T-cell (primary cell): ENCODE measurements at regions of chr7 and their contacts with region 1.

Region 1: GRCh38 chr7:23712368-23713284 is 2.6 kb downstream of the STK31 start:
- DNase-seq: peak in 1 of 35 experiments; percentile 71
- ATAC-seq: peak in 1 of 4 experiments; percentile 33
- H3K4me3 ChIP-seq: no peak overlapping the region
- H3K4me3 Mint-ChIP-seq: no peak overlapping the region
- H3K27ac ChIP-seq: no peak overlapping the region
- H3K27ac Mint-ChIP-seq: no peak overlapping the region
- H3K4me1 ChIP-seq: no peaks in the 10 kb centered on the region
- H3K4me1 Mint-ChIP-seq: no peaks in the 10 kb centered on the region
- H3K27me3 ChIP-seq: no peaks in the 10 kb centered on the region
- H3K27me3 Mint-ChIP-seq: peaks cover 0 to 4% of the 10 kb centered on the region in 2 donors

Region 2: DNA sequence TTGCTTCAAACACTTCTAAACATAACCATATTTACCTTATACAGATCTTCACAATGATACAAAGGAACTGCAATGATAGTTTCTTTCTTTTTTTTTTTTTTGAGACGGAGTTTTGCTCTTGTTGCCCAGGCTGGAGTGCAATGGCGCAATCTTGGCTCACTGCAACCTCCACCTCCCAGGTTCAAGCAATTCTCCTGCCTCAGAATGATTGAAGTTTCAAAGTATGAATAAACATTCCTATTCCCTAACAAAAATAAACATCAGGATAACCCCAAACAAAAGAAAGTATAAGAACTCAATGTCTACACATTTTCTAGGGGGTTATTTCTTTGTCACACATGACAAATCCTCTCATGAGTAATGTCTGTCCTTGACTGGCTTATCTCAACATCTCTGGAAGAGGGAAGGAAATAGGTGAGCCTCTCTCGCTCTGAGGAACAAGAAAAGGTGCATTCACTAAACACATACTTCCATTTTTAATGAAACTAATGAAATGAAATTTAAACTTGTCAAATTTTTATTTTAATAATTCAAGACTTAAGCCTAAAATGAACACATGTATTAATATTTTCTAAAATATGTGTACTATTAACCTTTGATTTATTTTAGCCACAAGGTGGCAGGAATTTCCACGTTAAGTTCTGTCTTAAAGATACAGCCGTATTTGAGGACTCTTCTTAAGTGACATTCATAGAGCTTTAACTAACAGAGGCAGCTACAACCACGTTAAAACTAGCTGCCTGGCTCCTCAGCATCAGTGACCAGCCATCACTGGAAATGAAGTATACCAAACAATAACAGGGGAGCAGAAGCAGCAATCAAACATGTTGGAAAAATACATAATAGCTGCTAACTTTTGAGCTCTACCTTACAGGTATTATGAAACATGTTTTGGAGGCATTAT is 355.2 kb before region 1 on chr7:
- CTCF ChIA-PET with region 1: interaction called in 1 of 2 experiments, 13 read pairs
- POLR2A ChIA-PET with region 1: interaction called in 1 of 2 experiments, 3 read pairs
- DNase-seq: peak in 1 of 35 experiments; percentile 46
- ATAC-seq: peak in 3 of 4 experiments; percentile 22 to 51 (median 32)
- H3K4me3 ChIP-seq: no peak overlapping the region
- H3K4me3 Mint-ChIP-seq: no peak overlapping the region
- H3K27ac ChIP-seq: no peak overlapping the region
- H3K27ac Mint-ChIP-seq: no peak overlapping the region
- H3K4me1 ChIP-seq: peaks cover 2 to 17% of the 10 kb centered on the region in 2 experiments
- H3K4me1 Mint-ChIP-seq: peaks cover 12 to 15% (median 12%) of the 10 kb centered on the region in 3 donors
- H3K27me3 ChIP-seq: peaks cover 0 to 3% of the 10 kb centered on the region in 2 experiments
- H3K27me3 Mint-ChIP-seq: peaks cover 5 to 9% of the 10 kb centered on the region in 2 donors

Region 3: GRCh38 chr7:23546897-23547572 is 165.6 kb before region 1 on chr7:
- CTCF ChIA-PET with region 1: interaction called, 7 to 18 read pairs
- POLR2A ChIA-PET with region 1: no interaction called
- DNase-seq: peak; percentile 52 to 93 (median 71)
- ATAC-seq: peak; percentile 91 to 94 (median 93)
- H3K4me3 ChIP-seq: no peak overlapping the region
- H3K4me3 Mint-ChIP-seq: no peak overlapping the region
- H3K27ac ChIP-seq: no peak overlapping the region
- H3K27ac Mint-ChIP-seq: peak overlapping the region; percentile 25 to 36
- H3K4me1 ChIP-seq: no peaks in the 10 kb centered on the region
- H3K4me1 Mint-ChIP-seq: peaks cover 0 to 10% (median 8%) of the 10 kb centered on the region in 3 donors
- H3K27me3 ChIP-seq: no peaks in the 10 kb centered on the region
- H3K27me3 Mint-ChIP-seq: no peaks in the 10 kb centered on the region

Region 4: GRCh38 chr7:23570592-23571200 is 141.9 kb before region 1 on chr7:
- CTCF ChIA-PET with region 1: interaction called, 7 to 14 read pairs
- POLR2A ChIA-PET with region 1: no interaction called
- DNase-seq: peak; percentile 31 to 74 (median 55)
- ATAC-seq: peak; percentile 54 to 83 (median 70)
- H3K4me3 ChIP-seq: no peak overlapping the region
- H3K4me3 Mint-ChIP-seq: no peak overlapping the region
- H3K27ac ChIP-seq: no peak overlapping the region
- H3K27ac Mint-ChIP-seq: no peak overlapping the region
- H3K4me1 ChIP-seq: no peaks in the 10 kb centered on the region
- H3K4me1 Mint-ChIP-seq: no peaks in the 10 kb centered on the region
- H3K27me3 ChIP-seq: peaks cover 0 to 6% of the 10 kb centered on the region in 2 experiments
- H3K27me3 Mint-ChIP-seq: peaks cover 15 to 26% of the 10 kb centered on the region in 2 donors

Region 5: GRCh38 chr7:24722386-24723177 is 1010.0 kb after region 1 on chr7:
- CTCF ChIA-PET with region 1: interaction called in 1 of 2 experiments, 11 read pairs
- POLR2A ChIA-PET with region 1: no interaction called
- DNase-seq: no peak
- ATAC-seq: no peak
- H3K4me3 ChIP-seq: no peak overlapping the region
- H3K4me3 Mint-ChIP-seq: no peak overlapping the region
- H3K27ac ChIP-seq: no peak overlapping the region
- H3K27ac Mint-ChIP-seq: no peak overlapping the region
- H3K4me1 ChIP-seq: peaks cover under 1 to 10% of the 10 kb centered on the region in 2 experiments
- H3K4me1 Mint-ChIP-seq: peaks cover 7 to 10% (median 8%) of the 10 kb centered on the region in 3 donors
- H3K27me3 ChIP-seq: peaks cover 0 to 28% of the 10 kb centered on the region in 2 experiments
- H3K27me3 Mint-ChIP-seq: peaks cover 0 to 14% of the 10 kb centered on the region in 2 donors